Ascending aorta (tissue), 2 donors: ENCODE measurements at regions of chr14 and their contacts with region 1.

Region 1: DNA sequence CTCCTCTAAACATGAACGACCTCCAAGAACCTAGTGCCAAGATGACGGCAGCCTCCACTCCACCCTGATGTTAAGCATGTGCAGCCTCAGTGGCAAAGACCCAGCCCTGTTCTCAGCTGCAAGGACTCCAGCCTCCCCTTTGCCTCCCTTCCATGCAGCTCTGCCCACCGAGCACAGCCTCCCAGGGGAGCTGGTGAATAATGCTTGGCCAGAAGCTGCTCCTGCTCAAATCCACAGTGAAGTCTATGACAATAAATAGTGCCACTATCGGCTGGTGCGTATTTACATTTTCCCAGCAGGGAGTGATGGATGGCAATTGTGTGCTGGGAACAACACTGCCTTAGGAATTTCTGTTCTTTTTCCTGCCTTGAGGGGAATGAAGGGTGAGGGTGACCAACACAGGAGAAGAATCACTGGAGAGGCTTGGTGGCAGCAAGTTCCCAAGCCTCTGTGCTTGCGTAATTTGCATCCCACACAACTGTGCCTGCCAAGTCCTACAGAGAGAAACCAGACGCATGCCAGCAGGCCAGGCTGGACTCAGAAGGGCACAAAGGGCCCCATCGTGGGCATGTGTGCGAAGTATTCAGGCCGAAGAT is 29.9 kb upstream of the TC2N start:
- DNase-seq: peak; percentile 56 to 97
- H3K4me3 ChIP-seq: no peak overlapping the region
- H3K27ac ChIP-seq: peak overlapping the region; percentile 91 to 95
- H3K4me1 ChIP-seq: peaks cover 47 to 61% of the 10 kb centered on the region in 2 donors
- H3K27me3 ChIP-seq: no peaks in the 10 kb centered on the region
- CTCF ChIP-seq: no peak

Region 2: DNA sequence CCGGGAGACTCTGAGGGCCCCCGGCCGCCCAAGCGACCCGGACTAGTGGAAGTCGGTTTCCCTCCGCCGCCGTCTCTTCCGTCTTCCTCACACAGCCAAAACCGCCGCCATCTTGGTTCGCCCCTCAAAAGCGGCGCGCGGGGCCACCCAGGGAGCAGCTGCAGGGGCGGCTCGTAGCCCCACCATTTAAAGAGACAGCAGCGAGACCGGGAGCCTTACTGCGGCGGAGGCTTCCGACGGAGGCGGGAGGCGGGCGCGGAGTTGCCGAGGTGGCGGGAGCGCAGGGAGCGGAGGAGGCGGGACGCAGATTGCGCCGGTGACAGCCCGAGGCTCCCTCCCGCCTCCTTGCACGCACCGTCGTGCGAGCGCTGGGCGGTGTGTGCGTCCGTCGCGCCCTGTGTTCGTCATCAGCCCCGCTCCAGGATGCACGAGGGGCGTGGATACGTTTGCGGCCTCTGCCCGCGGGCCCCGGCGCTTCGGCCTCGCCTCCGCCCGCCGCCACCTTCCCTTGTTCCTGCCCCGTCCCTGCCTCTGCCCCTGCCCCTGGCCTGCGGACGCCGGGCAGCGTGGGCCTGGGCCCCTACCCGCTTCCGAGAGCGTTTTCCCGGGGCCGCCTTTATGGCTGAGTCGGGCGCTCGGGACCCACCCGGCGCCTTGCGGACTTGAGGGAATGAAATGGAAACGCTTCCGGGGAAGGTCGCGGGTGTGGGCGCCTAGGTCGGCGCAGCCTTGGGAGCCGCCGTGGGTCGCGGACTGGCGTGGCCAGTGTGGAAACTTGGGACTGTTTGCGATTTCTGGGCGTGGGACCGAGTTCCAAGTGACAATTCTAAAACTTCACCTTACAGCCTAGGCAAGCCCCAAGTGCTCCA is 386.8 kb before region 1 on chr14 and contains the start of gene PPP4R3A:
- intact Hi-C with region 1: no loop called
- DNase-seq: peak; percentile 79 to 95
- H3K4me3 ChIP-seq: peak within 1 kb of the TSS; percentile 91 to 99
- H3K27ac ChIP-seq: peak within 1 kb of the TSS; percentile 96 to 100
- H3K4me1 ChIP-seq: peaks cover 0 to 19% of the 10 kb centered on the region in 2 donors
- H3K27me3 ChIP-seq: no peaks in the 10 kb centered on the region
- CTCF ChIP-seq: no peak
- total RNA-seq, gene PPP4R3A: 76.2 TPM

Region 3: GRCh38 chr14:91836119-91836881 is 60.9 kb before region 1 on chr14:
- intact Hi-C with region 1: loop called (anchors 2 kb)
- DNase-seq: peak; percentile 39 to 92
- H3K4me3 ChIP-seq: peak overlapping the region; percentile 75 to 80
- H3K27ac ChIP-seq: peak overlapping the region; percentile 91 to 93
- H3K4me1 ChIP-seq: peaks cover 0 to 9% of the 10 kb centered on the region in 2 donors
- H3K27me3 ChIP-seq: no peaks in the 10 kb centered on the region
- CTCF ChIP-seq: no peak

Region 4: DNA sequence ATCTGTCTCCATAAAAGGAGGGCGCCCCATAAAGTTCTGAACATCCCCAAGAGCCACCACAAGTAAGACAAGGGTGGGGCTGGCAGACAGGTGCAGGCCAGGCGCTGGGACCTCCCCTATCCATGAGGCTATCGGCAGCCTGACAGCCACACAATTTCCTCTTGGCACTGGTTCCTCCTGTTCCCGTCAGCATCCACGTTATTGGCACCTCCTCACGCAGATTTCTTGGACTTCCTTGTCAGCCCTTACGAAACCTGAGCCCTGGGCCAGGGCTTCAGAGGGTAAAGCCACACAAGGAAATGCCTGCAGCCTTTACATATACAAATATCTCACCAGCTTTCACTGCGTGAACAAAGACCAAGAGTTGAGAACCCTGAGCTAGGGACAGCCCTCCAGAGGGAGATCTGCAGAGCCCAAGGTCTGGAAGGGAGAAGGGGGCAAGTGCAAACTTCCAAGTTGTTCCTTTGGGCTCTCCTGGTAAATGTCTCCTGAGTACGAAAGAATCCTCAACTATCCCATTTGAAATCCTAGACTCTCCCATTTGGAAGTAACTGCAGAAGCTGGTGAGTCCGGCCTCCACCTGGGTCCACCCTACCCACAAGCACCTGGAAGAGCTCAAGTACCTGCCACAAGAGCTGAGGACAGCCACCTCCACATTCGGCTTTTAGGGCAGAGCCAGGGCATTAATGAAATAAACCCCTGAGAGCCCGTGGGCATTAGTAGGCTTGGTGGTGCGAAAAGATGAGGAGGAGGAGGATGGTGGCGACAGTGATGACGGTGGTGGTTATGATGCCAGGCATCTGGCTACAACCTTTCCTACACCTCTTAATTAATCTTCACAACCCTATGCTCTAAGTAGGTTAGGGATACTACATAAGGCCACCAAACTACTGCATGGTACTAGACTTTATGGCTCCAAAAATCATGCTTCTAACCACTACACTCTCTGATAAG is 24.4 kb before region 1 on chr14:
- intact Hi-C with region 1: loop called (anchors 1 kb)
- DNase-seq: peak; percentile 62 to 95
- H3K4me3 ChIP-seq: peak overlapping the region in 1 of 2 donors; percentile 18
- H3K27ac ChIP-seq: peak overlapping the region; percentile 77 to 78
- H3K4me1 ChIP-seq: peaks cover 13 to 20% of the 10 kb centered on the region in 2 donors
- H3K27me3 ChIP-seq: no peaks in the 10 kb centered on the region
- CTCF ChIP-seq: no peak

Region 5: GRCh38 chr14:91911474-91912032 is 14.3 kb after region 1 on chr14:
- intact Hi-C with region 1: loop called (anchors 2 kb)
- DNase-seq: no peak
- H3K4me3 ChIP-seq: no peak overlapping the region
- H3K27ac ChIP-seq: peak overlapping the region; percentile 58 to 62
- H3K4me1 ChIP-seq: peaks cover 7 to 29% of the 10 kb centered on the region in 2 donors
- H3K27me3 ChIP-seq: no peaks in the 10 kb centered on the region
- CTCF ChIP-seq: peak in 2 of 3 experiments; percentile 30 to 60

Region 6: GRCh38 chr14:91925001-91925726 is 28.0 kb after region 1 on chr14:
- intact Hi-C with region 1: loop called (anchors 2 kb)
- DNase-seq: no peak
- H3K4me3 ChIP-seq: peak overlapping the region in 1 of 2 donors; percentile 32
- H3K27ac ChIP-seq: peak overlapping the region; percentile 89 to 91
- H3K4me1 ChIP-seq: peaks cover 43 to 93% of the 10 kb centered on the region in 2 donors
- H3K27me3 ChIP-seq: no peaks in the 10 kb centered on the region
- CTCF ChIP-seq: no peak

Region 7: GRCh38 chr14:91947471-91948184 is 50.4 kb after region 1 on chr14 and contains the start of gene FBLN5:
- intact Hi-C with region 1: loop called (anchors 1 kb)
- DNase-seq: peak in 1 of 2 donors; percentile 82
- H3K4me3 ChIP-seq: peak within 1 kb of the TSS; percentile 53 to 75
- H3K27ac ChIP-seq: peak within 1 kb of the TSS; percentile 79 to 89
- H3K4me1 ChIP-seq: peaks cover 7 to 17% of the 10 kb centered on the region in 2 donors
- H3K27me3 ChIP-seq: no peaks in the 10 kb centered on the region
- CTCF ChIP-seq: no peak
- total RNA-seq, gene FBLN5: 280 TPM

Region 8: DNA sequence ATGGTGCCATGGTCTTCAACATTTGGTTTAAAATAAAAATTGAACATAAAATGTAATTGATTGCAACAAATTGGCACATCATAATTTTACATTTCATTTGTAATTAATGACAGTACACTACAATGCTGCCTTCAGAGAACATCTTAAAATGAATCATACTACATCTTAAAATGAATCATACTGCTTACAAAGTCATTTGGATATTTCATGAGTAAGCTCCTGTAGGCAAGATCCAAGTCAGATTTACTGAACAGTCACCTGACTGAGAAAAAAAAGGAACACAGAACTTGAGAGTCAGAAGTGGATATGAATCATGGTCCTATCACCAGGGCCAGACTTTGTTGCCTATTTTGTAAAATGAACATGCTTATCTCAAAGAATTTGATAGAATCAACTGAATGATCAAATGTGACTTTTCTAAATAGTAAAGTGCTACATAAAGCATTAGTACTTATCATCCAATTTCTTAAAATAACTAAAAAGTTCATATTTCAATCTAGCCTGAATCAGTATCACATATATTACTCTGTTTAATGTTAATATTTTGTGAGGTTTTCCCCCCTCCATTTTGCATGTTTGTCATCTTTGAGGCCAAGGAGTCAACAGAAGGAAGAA is 83.0 kb after region 1 on chr14:
- intact Hi-C with region 1: loop called (anchors 5 kb)
- DNase-seq: no peak
- H3K4me3 ChIP-seq: no peak overlapping the region
- H3K27ac ChIP-seq: peak overlapping the region; percentile 45 to 62
- H3K4me1 ChIP-seq: peaks cover 11 to 49% of the 10 kb centered on the region in 2 donors
- H3K27me3 ChIP-seq: no peaks in the 10 kb centered on the region
- CTCF ChIP-seq: no peak